Caco-2 (cell line): ENCODE measurements at regions of chr7 and their contacts with region 1.

Region 1: DNA sequence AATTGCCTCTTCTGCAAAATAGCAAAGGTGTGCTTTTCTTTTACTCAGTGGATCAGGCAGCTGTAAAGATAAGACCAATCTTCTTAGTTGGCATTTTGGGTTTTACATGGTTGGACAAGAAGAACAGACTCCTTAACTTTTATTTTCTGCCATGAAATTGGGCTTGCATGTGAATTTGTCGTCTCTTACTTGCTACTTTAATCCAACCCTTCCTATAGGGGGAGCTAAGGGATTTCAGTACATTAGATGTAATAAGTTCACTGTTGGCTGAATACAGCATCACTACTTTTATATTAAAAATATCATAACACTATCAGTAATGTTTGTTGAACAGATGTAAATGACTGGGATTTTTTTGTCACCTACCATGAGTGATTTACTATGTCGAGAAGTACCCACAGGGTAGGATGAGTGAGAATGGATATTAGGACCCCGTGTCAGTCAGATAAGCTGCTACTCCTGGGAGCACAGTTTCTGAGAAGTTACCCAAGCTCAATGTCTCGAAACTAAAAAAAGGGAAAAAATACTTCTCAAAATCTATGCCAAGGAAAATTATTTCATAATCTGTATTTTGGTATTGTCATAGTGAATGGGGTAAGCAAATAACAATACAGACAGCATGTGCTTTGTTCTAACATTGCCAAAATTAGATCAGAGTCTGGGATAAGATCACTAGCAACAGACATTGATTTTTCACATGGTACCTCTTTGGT is 127.4 kb upstream of the AGR3 start:
- DNase-seq: no peak
- H3K4me3 ChIP-seq: no peak overlapping the region
- H3K4me3 Mint-ChIP-seq: no peak overlapping the region
- H3K27ac Mint-ChIP-seq: no peak overlapping the region
- H3K4me1 ChIP-seq: no peaks in the 10 kb centered on the region
- H3K4me1 Mint-ChIP-seq: no peaks in the 10 kb centered on the region
- H3K27me3 ChIP-seq: no peaks in the 10 kb centered on the region
- H3K27me3 Mint-ChIP-seq: no peaks in the 10 kb centered on the region
- CTCF ChIP-seq: peak; percentile 15 to 49

Region 2: GRCh38 chr7:16935341-16935735 is 73.8 kb before region 1 on chr7:
- CTCF ChIA-PET with region 1: no interaction called
- POLR2A ChIA-PET with region 1: no interaction called
- intact Hi-C with region 1: no loop called
- DNase-seq: no peak
- H3K4me3 ChIP-seq: no peak overlapping the region
- H3K4me3 Mint-ChIP-seq: no peak overlapping the region
- H3K27ac Mint-ChIP-seq: no peak overlapping the region
- H3K4me1 ChIP-seq: peaks cover 5% of the 10 kb centered on the region; the same call in 1 of the 2 replicates
- H3K4me1 Mint-ChIP-seq: peaks cover 14% of the 10 kb centered on the region
- H3K27me3 ChIP-seq: no peaks in the 10 kb centered on the region
- H3K27me3 Mint-ChIP-seq: no peaks in the 10 kb centered on the region
- CTCF ChIP-seq: no peak

Region 3: DNA sequence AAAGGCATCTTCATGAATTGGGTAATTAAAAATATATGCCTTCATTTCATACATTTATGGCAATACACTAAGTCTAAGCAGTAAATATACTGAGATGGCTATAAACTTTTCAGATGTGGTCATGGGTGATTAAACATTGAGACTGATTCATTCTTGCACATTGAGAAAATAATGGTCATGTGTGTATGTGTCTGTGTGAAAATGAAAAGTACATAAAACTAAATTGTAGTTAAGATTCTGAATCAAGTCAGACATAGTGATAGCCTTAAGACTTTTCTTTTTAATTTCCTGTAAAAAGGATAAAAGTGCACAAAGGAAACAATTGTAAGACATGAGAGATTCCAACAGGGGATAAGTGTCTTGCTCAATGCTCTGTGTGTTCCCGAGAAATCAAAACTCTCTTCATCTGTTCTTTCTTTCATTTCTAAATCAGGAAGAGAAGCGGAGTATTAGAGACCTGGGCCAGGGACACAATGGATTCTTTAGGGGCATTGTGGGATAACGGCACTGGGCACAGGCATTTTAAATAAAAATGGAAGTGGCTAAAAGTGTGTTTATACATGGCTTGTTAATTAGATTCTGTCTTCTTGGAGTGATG is 57.6 kb before region 1 on chr7:
- CTCF ChIA-PET with region 1: no interaction called
- POLR2A ChIA-PET with region 1: no interaction called
- intact Hi-C with region 1: no loop called
- DNase-seq: no peak
- H3K4me3 ChIP-seq: no peak overlapping the region
- H3K4me3 Mint-ChIP-seq: no peak overlapping the region
- H3K27ac Mint-ChIP-seq: no peak overlapping the region
- H3K4me1 ChIP-seq: no peaks in the 10 kb centered on the region
- H3K4me1 Mint-ChIP-seq: no peaks in the 10 kb centered on the region
- H3K27me3 ChIP-seq: no peaks in the 10 kb centered on the region
- H3K27me3 Mint-ChIP-seq: no peaks in the 10 kb centered on the region
- CTCF ChIP-seq: no peak

Region 4: GRCh38 chr7:16989811-16990413 is 19.3 kb before region 1 on chr7:
- CTCF ChIA-PET with region 1: no interaction called
- POLR2A ChIA-PET with region 1: no interaction called
- intact Hi-C with region 1: no loop called
- DNase-seq: peak; percentile 65 to 72
- H3K4me3 ChIP-seq: no peak overlapping the region
- H3K4me3 Mint-ChIP-seq: peak overlapping the region; percentile 49
- H3K27ac Mint-ChIP-seq: no peak overlapping the region
- H3K4me1 ChIP-seq: peaks cover 17% of the 10 kb centered on the region
- H3K4me1 Mint-ChIP-seq: peaks cover 15% of the 10 kb centered on the region
- H3K27me3 ChIP-seq: no peaks in the 10 kb centered on the region
- H3K27me3 Mint-ChIP-seq: no peaks in the 10 kb centered on the region
- CTCF ChIP-seq: no peak

Region 5: DNA sequence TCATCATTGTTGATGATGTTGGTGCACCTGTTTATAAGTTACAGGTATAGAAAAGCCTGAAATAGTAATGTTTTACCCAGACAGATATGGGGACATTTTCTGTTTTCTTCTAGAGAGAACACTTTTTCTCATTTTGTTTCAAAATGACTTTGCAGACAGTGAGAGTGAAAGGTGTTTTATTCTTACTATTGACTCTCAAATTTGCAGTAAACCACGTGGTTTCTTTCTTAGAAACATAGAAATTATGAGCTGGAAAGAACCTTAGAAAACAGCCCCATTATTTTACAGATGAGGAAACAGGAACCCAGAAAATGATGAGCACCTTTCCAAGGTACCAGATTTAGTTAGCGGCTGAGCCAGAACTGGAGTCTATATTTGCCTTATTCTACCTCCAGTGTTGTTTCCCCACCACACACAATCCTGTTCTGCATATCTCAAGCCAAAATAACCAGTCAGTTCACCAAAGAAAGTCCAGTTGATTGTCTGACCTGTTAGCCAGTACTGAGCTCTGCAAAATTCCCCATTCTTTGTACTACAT is 150.4 kb after region 1 on chr7:
- CTCF ChIA-PET with region 1: interaction called, 3 read pairs
- POLR2A ChIA-PET with region 1: no interaction called
- intact Hi-C with region 1: loop called (anchors 2 kb)
- DNase-seq: no peak
- H3K4me3 ChIP-seq: no peak overlapping the region
- H3K4me3 Mint-ChIP-seq: no peak overlapping the region
- H3K27ac Mint-ChIP-seq: no peak overlapping the region
- H3K4me1 ChIP-seq: no peaks in the 10 kb centered on the region
- H3K4me1 Mint-ChIP-seq: no peaks in the 10 kb centered on the region
- H3K27me3 ChIP-seq: no peaks in the 10 kb centered on the region
- H3K27me3 Mint-ChIP-seq: no peaks in the 10 kb centered on the region
- CTCF ChIP-seq: no peak